HEK293 (cell line): ENCODE measurements at regions of chr16 and their contacts with region 1.

Region 1: GRCh38 chr16:1342526-1343427 is 8.9 kb downstream of the TSR3 start:
- H3K4me3 ChIP-seq: peak overlapping the region; percentile 24
- H3K27ac ChIP-seq: no peak overlapping the region
- H3K4me1 ChIP-seq: peaks cover 4% of the 10 kb centered on the region; the same call in 1 of the 2 replicates
- CTCF ChIP-seq: peak; percentile 65

Region 2: GRCh38 chr16:1258225-1258600 is 84.6 kb before region 1 on chr16:
- CTCF ChIA-PET with region 1: no interaction called
- POLR2A ChIA-PET with region 1: no interaction called
- H3K4me3 ChIP-seq: no peak overlapping the region
- H3K27ac ChIP-seq: no peak overlapping the region
- H3K4me1 ChIP-seq: no peaks in the 10 kb centered on the region
- CTCF ChIP-seq: no peak

Region 3: DNA sequence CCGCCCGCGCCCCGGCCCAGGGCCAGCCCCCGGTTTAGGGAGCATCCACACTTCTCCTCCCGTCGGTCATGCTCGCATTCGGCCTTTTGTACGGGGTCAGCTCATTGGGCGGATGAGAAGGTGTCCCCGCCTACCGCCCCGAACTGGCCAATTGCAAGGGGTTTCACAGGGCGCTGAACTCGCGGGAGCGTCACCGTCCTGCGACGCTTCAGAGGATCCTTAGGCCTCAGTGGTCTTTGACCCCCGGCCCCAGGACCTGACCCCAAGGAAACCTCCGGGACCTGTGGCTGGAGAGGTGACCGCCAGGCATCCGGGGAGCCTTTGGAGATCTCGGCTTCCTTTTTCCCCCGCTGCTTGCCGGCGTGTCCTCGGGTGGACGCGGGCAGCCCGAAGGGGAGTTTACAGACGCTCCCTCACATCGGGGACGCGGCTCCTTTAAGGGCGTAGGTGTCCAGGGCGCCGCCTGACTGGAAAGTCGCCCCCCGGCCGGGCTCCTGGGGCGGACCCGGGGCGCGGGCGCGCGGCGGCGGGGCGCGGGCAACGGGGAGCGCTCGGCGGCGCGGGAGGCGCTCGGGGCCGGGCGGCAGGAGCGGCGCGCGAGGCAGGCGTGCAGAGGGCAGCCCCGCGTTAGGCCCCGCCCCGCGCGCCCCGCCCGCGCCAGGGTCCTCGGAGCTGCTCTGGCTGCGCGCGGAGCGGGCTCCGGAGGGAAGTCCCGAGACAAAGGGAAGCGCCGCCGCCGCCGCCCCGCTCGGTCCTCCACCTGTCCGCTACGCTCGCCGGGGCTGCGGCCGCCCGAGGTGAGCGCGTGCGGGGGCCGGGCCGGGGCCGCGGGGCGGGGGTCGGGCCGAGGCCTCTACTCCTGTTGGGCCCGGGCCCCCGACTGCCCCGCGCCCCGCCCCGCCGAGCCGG is 33.5 kb before region 1 on chr16 and contains the start of gene UBE2I:
- CTCF ChIA-PET with region 1: no interaction called
- POLR2A ChIA-PET with region 1: interaction called, 10 read pairs
- H3K4me3 ChIP-seq: peak within 1 kb of the TSS; percentile 81
- H3K27ac ChIP-seq: peak within 1 kb of the TSS; percentile 100
- H3K4me1 ChIP-seq: peaks cover 8% of the 10 kb centered on the region
- CTCF ChIP-seq: no peak